ENCODE measurements at regions of chr17 and their contacts with region 1.

Region 1: DNA sequence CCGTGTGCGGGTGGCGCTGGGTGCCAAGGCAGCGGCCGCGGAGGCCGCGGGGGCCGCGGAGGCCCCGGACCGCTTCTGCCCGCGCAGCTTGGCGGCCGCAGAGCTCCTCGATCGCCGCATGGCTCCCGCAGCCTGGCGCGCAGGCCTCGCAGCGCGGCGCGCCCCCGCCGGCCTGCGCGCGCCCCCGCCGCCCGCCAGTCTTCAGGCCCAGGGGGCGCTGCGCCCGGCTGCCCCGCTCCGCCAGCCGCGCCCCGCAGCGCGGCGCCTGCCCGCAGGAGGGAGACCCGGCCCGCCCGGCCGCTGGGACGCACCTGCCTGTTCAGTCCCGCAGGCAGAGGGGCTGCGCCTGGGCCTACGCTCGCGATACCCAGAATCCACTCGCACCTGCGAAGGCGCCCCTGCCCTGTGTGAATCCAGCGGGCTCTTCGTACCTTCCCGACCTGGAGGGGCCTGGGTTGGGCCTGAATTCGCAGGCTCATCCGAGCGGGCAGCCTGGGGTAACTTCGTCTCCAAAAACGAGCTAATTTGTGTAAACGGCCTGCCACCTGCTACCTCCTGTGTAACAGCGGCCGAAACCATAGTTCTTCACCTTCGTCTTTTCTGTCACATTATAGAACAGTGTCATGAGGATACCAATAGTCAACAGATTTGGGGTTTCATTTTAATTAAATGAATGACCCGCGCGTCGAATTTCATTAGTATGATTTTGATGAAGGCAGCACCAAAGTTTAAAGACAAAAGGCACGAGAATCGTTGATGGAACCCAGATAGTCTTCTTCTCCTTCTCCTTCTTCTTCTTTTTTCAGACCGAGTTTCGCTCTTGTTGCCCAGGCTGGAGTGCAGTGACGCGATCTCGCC is at the start of gene CENPV:
- DNase-seq: no peak
- H3K4me3 ChIP-seq: peak within 1 kb of the TSS; percentile 74 to 83 (median 76)
- H3K27ac ChIP-seq: peak within 1 kb of the TSS; percentile 58 to 74 (median 71)
- H3K4me1 ChIP-seq: peaks cover 9 to 24% (median 20%) of the 10 kb centered on the region in 4 donors
- H3K27me3 ChIP-seq: no peaks in the 10 kb centered on the region
- CTCF ChIP-seq: peak in 1 of 3 experiments; percentile 18
- EP300 ChIP-seq: no peak
- POLR2A ChIP-seq: no peak
- total RNA-seq, gene CENPV: 4.2 to 10.9 (median 8.2) TPM

Region 2: GRCh38 chr17:16215273-16215964 is 138.1 kb before region 1 on chr17 and contains the start of gene NCOR1:
- intact Hi-C with region 1: loop called (anchors 10 kb)
- DNase-seq: peak; percentile 94
- H3K4me3 ChIP-seq: peak within 1 kb of the TSS; percentile 91 to 99 (median 99)
- H3K27ac ChIP-seq: peak within 1 kb of the TSS; percentile 91 to 99 (median 96)
- H3K4me1 ChIP-seq: peaks cover 43 to 68% (median 64%) of the 10 kb centered on the region in 4 donors
- H3K27me3 ChIP-seq: no peaks in the 10 kb centered on the region
- CTCF ChIP-seq: peak; percentile 26 to 47 (median 33)
- EP300 ChIP-seq: no peak
- POLR2A ChIP-seq: peak; percentile 41
- total RNA-seq, gene NCOR1: 100 to 123 (median 109) TPM

Region 3: DNA sequence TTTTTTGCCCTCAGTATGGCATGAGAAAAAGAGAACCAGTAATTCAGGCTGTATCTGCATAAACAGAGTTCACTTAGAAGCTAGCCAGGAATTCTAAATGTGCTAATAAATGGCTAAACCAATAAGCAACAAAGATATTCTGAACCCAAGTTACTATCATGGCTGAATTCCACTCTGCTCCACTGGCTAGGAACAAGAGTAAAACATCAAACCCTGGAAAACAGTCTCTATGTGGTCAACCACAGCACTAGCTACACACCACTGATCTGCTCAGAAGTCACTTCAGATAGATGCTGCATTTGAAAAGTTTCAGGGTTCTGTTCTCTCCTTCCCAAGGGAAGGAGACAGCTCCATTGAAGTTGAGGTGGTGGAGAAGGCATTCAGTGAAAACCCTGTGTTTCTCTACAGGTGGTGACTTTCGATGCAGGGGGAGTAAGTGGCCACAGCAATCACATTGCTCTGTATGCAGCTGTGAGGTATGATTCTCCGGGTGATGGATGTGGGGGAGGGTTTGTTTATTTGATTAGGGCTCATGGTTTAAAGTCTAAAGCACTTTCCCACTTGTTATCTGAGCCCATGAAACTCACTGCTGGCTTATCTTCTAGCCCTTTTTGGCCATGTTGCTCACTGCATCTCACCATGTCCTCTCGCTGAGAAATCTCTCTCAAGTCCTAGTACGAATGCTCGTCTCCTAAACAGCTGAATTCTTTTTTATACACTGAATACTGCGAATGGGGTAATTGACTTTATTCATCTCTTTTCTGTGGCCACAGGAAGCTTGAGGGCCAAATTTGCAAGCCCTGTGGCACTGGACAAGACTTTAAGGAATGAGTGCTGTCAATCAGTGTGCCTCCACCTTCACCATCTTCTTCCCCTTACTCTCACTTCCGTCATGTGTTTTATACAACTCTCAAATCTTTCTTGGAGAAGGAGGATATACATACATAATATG is 40.1 kb before region 1 on chr17:
- intact Hi-C with region 1: no loop called
- DNase-seq: no peak
- H3K4me3 ChIP-seq: no peak overlapping the region
- H3K27ac ChIP-seq: no peak overlapping the region
- H3K4me1 ChIP-seq: no peaks in the 10 kb centered on the region
- H3K27me3 ChIP-seq: no peaks in the 10 kb centered on the region
- CTCF ChIP-seq: no peak
- EP300 ChIP-seq: no peak
- POLR2A ChIP-seq: no peak